CD8-positive, alpha-beta T cell (primary cell): ENCODE measurements at regions of chr11 and their contacts with region 1.

Region 1: GRCh38 chr11:7442588-7443215 is 42.6 kb upstream of the OLFML1 start:
- DNase-seq: peak; percentile 39 to 79 (median 66)
- ATAC-seq: peak; percentile 72
- H3K4me3 ChIP-seq: no peak overlapping the region
- H3K4me3 Mint-ChIP-seq: no peak overlapping the region
- H3K27ac ChIP-seq: no peak overlapping the region
- H3K27ac Mint-ChIP-seq: no peak overlapping the region
- H3K4me1 ChIP-seq: no peaks in the 10 kb centered on the region
- H3K4me1 Mint-ChIP-seq: no peaks in the 10 kb centered on the region
- H3K27me3 ChIP-seq: no peaks in the 10 kb centered on the region
- H3K27me3 Mint-ChIP-seq: no peaks in the 10 kb centered on the region
- CTCF ChIP-seq: peak; percentile 95

Region 2: GRCh38 chr11:6812390-6813005 is 630.2 kb before region 1 on chr11:
- CTCF ChIA-PET with region 1: interaction called, 8 read pairs
- POLR2A ChIA-PET with region 1: no interaction called
- intact Hi-C with region 1: loop called in 1 of 2 experiments (anchors 5 kb)
- DNase-seq: peak in 8 of 9 experiments; percentile 3 to 63 (median 24)
- ATAC-seq: peak; percentile 96
- H3K4me3 ChIP-seq: no peak overlapping the region
- H3K4me3 Mint-ChIP-seq: no peak overlapping the region
- H3K27ac ChIP-seq: no peak overlapping the region
- H3K27ac Mint-ChIP-seq: no peak overlapping the region
- H3K4me1 ChIP-seq: no peaks in the 10 kb centered on the region
- H3K4me1 Mint-ChIP-seq: no peaks in the 10 kb centered on the region
- H3K27me3 ChIP-seq: no peaks in the 10 kb centered on the region
- H3K27me3 Mint-ChIP-seq: peaks cover 30% of the 10 kb centered on the region
- CTCF ChIP-seq: peak; percentile 92

Region 3: DNA sequence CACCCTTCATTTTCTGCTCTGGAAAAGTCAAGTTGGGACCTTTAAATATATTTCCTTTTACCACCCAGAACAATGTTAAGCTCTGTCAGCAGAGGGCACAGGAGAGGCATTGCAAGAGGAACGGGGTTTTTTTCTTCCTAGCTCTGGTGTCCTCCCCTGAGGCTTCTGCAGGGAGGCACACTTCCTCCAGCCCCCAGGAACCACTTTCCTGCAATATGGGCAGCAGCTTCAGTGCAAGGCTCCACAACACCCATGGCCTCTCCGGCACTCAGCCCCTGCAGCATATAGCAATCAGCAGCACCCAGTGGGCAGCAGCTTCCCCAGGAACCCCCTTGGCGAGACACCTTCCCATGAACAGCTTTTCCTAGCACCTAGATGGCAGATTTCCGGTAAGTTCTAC is 89.6 kb before region 1 on chr11:
- CTCF ChIA-PET with region 1: interaction called, 6 read pairs
- POLR2A ChIA-PET with region 1: no interaction called
- intact Hi-C with region 1: loop called (anchors 1 to 2 kb)
- DNase-seq: peak in 2 of 9 experiments; percentile 4 to 39
- ATAC-seq: no peak
- H3K4me3 ChIP-seq: no peak overlapping the region
- H3K4me3 Mint-ChIP-seq: no peak overlapping the region
- H3K27ac ChIP-seq: no peak overlapping the region
- H3K27ac Mint-ChIP-seq: no peak overlapping the region
- H3K4me1 ChIP-seq: no peaks in the 10 kb centered on the region
- H3K4me1 Mint-ChIP-seq: no peaks in the 10 kb centered on the region
- H3K27me3 ChIP-seq: no peaks in the 10 kb centered on the region
- H3K27me3 Mint-ChIP-seq: peaks cover 8% of the 10 kb centered on the region
- CTCF ChIP-seq: no peak

Region 4: GRCh38 chr11:7454855-7455254 is 12.2 kb after region 1 on chr11:
- CTCF ChIA-PET with region 1: interaction called, 15 read pairs
- POLR2A ChIA-PET with region 1: no interaction called
- intact Hi-C with region 1: no loop called
- DNase-seq: no peak
- ATAC-seq: no peak
- H3K4me3 ChIP-seq: no peak overlapping the region
- H3K4me3 Mint-ChIP-seq: no peak overlapping the region
- H3K27ac ChIP-seq: no peak overlapping the region
- H3K27ac Mint-ChIP-seq: no peak overlapping the region
- H3K4me1 ChIP-seq: no peaks in the 10 kb centered on the region
- H3K4me1 Mint-ChIP-seq: no peaks in the 10 kb centered on the region
- H3K27me3 ChIP-seq: no peaks in the 10 kb centered on the region
- H3K27me3 Mint-ChIP-seq: no peaks in the 10 kb centered on the region
- CTCF ChIP-seq: no peak